Aorta (tissue), 5 donors: ENCODE measurements at regions of chr1 and their contacts with region 1.

Region 1: GRCh38 chr1:11138952-11139351 is 39.3 kb upstream of the EXOSC10 start:
- DNase-seq: no peak
- ATAC-seq: no peak
- H3K4me3 ChIP-seq: no peak overlapping the region
- H3K27ac ChIP-seq: no peak overlapping the region
- H3K4me1 ChIP-seq: peaks cover 0 to 7% of the 10 kb centered on the region in 2 donors
- H3K27me3 ChIP-seq: no peaks in the 10 kb centered on the region

Region 2: GRCh38 chr1:11114966-11115365 is 24.0 kb before region 1 on chr1:
- intact Hi-C with region 1: loop called in 1 of 2 experiments (anchors 2 kb)
- DNase-seq: no peak
- ATAC-seq: no peak
- H3K4me3 ChIP-seq: no peak overlapping the region
- H3K27ac ChIP-seq: no peak overlapping the region
- H3K4me1 ChIP-seq: no peaks in the 10 kb centered on the region
- H3K27me3 ChIP-seq: no peaks in the 10 kb centered on the region